ENCODE measurements at regions of chr9 and their contacts with region 1.

Region 1: GRCh38 chr9:104927912-104928740 is at the start of gene ABCA1:
- DNase-seq: peak; percentile 61
- H3K4me3 Mint-ChIP-seq: peak within 1 kb of the TSS; percentile 86
- H3K27ac Mint-ChIP-seq: peak within 1 kb of the TSS; percentile 51
- H3K4me1 Mint-ChIP-seq: peaks cover 16% of the 10 kb centered on the region
- H3K27me3 Mint-ChIP-seq: peaks cover 16% of the 10 kb centered on the region
- total RNA-seq, gene ABCA1: 1.1 and 1.3 TPM in 2 replicates

Region 2: DNA sequence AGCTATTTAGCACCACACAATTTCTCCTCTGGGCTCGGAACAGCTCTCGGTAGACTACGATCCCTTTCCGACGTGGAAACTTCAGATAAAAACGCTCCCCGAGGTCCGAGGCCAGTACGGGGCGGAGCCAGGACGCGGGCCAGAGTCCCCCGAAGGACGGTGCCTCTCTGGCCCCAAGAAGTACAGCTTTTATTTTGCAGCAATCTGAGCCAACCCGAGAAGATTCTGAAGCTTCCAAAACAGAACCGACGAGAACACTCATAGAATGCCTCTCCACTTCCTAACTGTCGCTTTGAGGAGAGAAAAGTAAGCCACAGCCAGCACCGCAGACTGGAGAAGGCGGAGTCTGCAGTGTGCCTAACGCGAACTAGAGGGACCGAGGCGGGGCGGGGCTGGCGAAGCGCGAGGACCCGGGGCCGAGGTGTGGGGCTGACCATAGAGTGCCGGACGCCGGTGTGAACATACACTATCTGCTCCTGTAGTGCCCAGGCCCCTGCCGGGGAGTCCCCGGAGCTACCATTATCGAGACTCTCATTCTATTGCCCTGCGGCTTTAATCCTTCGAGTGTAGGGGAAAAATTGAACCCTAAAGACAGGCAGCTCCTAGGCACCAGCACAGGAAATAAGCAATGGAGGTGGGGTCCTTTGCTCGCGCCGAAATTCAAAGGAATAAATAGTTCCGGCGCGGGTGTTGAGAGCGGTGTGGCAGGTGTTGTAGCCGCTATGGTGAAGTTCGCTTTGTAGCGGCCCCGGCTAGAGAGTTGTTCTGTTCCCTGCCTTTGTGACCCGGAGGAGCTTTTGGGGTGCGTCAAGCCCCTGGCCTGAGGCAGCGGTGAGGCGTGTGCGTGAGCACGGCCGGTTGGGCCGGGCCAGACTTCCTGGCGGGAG is 834.2 kb before region 1 on chr9 and contains the start of gene SMC2:
- intact Hi-C with region 1: loop called (anchors 10 kb)
- DNase-seq: peak; percentile 90
- H3K4me3 Mint-ChIP-seq: peak within 1 kb of the TSS; percentile 98
- H3K27ac Mint-ChIP-seq: peak within 1 kb of the TSS; percentile 100
- H3K4me1 Mint-ChIP-seq: peaks cover 37% of the 10 kb centered on the region
- H3K27me3 Mint-ChIP-seq: no peaks in the 10 kb centered on the region
- total RNA-seq, gene SMC2: 51.9 and 52.5 TPM in 2 replicates

Region 3: DNA sequence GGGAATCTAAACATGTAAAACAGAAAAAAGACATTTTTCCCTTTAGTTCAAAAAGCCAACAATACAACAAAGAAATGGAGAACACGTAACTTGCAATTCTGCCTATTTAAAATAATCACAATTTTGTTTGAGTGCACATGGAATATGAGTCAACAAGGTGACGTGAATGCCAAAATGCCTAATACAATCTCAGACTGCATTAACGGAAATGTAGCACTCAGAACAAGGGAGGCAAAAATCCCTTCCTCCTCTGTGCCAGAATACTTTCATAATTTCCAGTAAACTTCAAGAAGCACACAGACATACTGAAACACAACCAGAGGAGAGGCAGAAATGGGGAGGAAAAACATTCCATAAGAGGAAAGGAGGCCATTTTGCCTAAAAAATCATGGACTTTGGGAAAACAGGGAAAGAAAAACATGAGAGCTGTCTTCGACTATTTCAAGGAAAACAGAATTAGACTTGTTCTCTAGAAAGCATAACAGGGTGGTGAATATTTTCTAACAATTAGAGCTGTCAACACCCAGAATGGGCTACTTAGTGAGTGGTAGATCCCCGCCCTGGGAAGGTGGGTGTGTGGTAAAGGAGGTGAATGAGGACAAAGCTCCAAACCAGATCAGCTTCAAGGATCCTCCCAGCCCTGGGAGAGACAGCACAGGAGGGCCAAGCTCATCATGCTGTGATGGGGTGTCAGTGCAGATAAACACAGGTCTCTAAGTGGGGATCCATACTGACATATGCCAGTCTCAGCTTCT is 48.4 kb before region 1 on chr9:
- intact Hi-C with region 1: no loop called
- DNase-seq: no peak
- H3K4me3 Mint-ChIP-seq: no peak overlapping the region
- H3K27ac Mint-ChIP-seq: no peak overlapping the region
- H3K4me1 Mint-ChIP-seq: no peaks in the 10 kb centered on the region
- H3K27me3 Mint-ChIP-seq: no peaks in the 10 kb centered on the region

Region 4: DNA sequence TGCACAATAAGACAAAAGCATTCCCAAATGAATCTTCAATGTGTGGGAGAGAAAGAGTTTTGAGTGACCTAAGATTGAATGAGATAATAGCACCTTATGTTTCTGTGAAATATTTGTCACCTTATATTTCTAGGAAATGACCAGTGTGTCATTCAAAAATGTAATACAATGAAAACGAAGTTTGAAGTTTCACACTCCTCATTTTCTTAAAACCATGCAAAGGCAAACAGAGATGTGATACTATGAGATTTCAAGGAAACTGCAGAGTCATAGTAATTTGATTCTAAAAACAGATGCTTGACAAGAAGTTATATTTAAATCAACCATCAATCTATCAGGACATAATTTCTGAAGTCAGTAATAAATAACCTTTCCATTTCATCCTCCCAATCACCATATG is 13.5 kb after region 1 on chr9:
- intact Hi-C with region 1: loop called (anchors 2 kb)
- DNase-seq: no peak
- H3K4me3 Mint-ChIP-seq: no peak overlapping the region
- H3K27ac Mint-ChIP-seq: no peak overlapping the region
- H3K4me1 Mint-ChIP-seq: peaks cover 8% of the 10 kb centered on the region
- H3K27me3 Mint-ChIP-seq: peaks cover 2% of the 10 kb centered on the region

Region 5: DNA sequence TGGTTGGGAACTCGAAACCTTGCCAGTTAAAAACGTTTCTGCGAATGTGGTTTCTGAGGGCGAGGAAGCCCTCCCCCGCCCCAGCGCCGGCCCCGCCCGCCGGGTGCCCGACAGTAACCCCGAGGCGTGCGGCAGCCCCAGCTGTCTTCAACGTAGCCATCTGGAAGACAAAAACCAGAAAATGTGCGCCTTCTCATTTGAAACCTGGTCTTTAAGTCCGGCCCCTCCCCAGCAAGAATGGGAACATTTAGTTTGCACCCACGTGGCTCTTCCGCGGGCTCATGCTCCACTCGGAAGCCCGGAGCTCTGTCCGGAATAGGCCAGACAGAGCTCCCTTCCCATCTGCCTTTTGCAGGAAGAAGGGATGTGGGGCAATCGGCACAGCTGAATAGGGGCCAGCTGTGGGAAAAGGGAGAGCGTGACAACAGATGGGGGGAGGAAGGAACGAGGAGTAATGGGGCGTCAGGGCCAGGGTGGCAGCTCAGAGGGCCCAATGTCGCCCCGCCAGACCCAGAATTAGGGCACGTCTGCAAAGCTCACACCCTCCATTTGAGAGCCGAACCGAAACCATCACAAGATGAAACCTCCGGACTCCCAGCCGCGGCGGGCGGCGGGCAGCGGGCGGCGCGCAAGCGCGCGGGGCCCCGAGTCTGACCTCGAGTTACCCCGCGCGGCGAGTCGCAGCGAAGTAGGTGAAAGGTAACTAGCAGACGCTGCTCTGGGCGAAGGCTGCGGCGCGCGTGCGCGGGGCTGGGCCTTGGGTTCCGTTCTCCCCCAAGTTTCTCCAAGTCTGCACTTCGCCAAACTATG is 63.2 kb after region 1 on chr9:
- intact Hi-C with region 1: loop called (anchors 1 kb)
- DNase-seq: peak; percentile 79
- H3K4me3 Mint-ChIP-seq: peak overlapping the region; percentile 84
- H3K27ac Mint-ChIP-seq: peak overlapping the region; percentile 74
- H3K4me1 Mint-ChIP-seq: peaks cover 44% of the 10 kb centered on the region
- H3K27me3 Mint-ChIP-seq: peaks cover 29% of the 10 kb centered on the region

Region 6: GRCh38 chr9:105157130-105157583 is 229.0 kb after region 1 on chr9:
- intact Hi-C with region 1: loop called (anchors 1 kb)
- DNase-seq: no peak
- H3K4me3 Mint-ChIP-seq: no peak overlapping the region
- H3K27ac Mint-ChIP-seq: no peak overlapping the region
- H3K4me1 Mint-ChIP-seq: peaks cover 6% of the 10 kb centered on the region
- H3K27me3 Mint-ChIP-seq: no peaks in the 10 kb centered on the region

Region 7: DNA sequence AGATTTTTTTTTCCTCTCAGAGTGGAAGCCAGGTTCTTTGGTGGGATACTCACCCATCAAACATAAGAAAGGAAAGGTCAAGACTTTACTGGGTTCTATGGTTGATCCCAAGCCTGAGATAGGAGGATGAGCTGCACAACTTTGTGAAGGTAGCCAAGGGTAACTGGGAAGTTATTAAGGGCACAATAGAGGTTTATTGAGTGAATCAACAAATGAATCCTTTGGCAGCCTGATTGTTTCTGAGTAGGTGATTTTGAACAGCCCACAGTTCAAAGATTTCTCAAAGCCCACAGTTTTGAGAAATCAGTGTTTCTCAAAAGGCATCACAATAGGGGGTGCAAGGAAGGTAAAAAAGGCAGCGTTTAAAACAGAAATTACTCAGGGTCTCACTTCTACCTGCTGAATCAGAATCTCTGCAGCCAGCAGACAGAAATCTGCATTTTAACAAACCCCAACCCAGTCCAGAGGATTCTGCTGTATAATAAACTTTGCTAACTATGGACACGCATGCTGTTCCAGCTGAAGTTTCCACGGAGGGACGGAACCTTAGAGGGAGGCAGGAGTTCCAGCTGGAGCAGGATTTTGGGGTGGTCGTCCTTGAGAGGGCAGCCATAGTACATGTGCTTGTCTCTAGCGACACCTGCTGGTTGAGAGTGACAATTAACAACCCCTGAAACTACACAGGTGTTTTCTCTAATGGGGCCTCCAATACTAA is 487.0 kb after region 1 on chr9:
- intact Hi-C with region 1: loop called (anchors 1 kb)
- DNase-seq: peak; percentile 25
- H3K4me3 Mint-ChIP-seq: no peak overlapping the region
- H3K27ac Mint-ChIP-seq: no peak overlapping the region
- H3K4me1 Mint-ChIP-seq: peaks cover 13% of the 10 kb centered on the region
- H3K27me3 Mint-ChIP-seq: peaks cover 46% of the 10 kb centered on the region